Activated CD4-positive, alpha-beta memory T cell treated with anti-CD3 and anti-CD28 coated beads, Interleukin-2, amount 10 ng/mL, durations not matched to agents 7 days and 5 days (primary cell): ENCODE measurements at regions of chr16 and their contacts with region 1.

Region 1: GRCh38 chr16:31179747-31180459 is at the start of gene FUS:
- DNase-seq: peak; percentile 91
- H3K4me3 Mint-ChIP-seq: peak within 1 kb of the TSS; percentile 93
- H3K27ac Mint-ChIP-seq: peak within 1 kb of the TSS; percentile 98
- H3K4me1 Mint-ChIP-seq: peaks cover 53% of the 10 kb centered on the region
- H3K27me3 Mint-ChIP-seq: peaks cover 2% of the 10 kb centered on the region
- total RNA-seq, gene FUS: 386 to 397 TPM

Region 2: GRCh38 chr16:31055613-31056012 is 124.3 kb before region 1 on chr16:
- CTCF ChIA-PET with region 1: no interaction called
- POLR2A ChIA-PET with region 1: no interaction called
- DNase-seq: no peak
- H3K4me3 Mint-ChIP-seq: no peak overlapping the region
- H3K27ac Mint-ChIP-seq: no peak overlapping the region
- H3K4me1 Mint-ChIP-seq: peaks cover 20% of the 10 kb centered on the region
- H3K27me3 Mint-ChIP-seq: peaks cover 2% of the 10 kb centered on the region

Region 3: GRCh38 chr16:31168848-31169247 is 11.1 kb before region 1 on chr16:
- CTCF ChIA-PET with region 1: interaction called, 4 read pairs
- POLR2A ChIA-PET with region 1: interaction called, 16 read pairs
- DNase-seq: no peak
- H3K4me3 Mint-ChIP-seq: no peak overlapping the region
- H3K27ac Mint-ChIP-seq: no peak overlapping the region
- H3K4me1 Mint-ChIP-seq: no peaks in the 10 kb centered on the region
- H3K27me3 Mint-ChIP-seq: no peaks in the 10 kb centered on the region

Region 4: GRCh38 chr16:31202414-31203375 is 22.8 kb after region 1 on chr16 and contains the start of gene PYCARD:
- CTCF ChIA-PET with region 1: interaction called, 5 read pairs
- POLR2A ChIA-PET with region 1: interaction called, 77 read pairs
- DNase-seq: peak; percentile 58
- H3K4me3 Mint-ChIP-seq: peak within 1 kb of the TSS; percentile 87
- H3K27ac Mint-ChIP-seq: peak within 1 kb of the TSS; percentile 79
- H3K4me1 Mint-ChIP-seq: peaks cover 61% of the 10 kb centered on the region
- H3K27me3 Mint-ChIP-seq: peaks cover 5% of the 10 kb centered on the region
- total RNA-seq, gene PYCARD: 96.1 to 102 TPM

Region 5: DNA sequence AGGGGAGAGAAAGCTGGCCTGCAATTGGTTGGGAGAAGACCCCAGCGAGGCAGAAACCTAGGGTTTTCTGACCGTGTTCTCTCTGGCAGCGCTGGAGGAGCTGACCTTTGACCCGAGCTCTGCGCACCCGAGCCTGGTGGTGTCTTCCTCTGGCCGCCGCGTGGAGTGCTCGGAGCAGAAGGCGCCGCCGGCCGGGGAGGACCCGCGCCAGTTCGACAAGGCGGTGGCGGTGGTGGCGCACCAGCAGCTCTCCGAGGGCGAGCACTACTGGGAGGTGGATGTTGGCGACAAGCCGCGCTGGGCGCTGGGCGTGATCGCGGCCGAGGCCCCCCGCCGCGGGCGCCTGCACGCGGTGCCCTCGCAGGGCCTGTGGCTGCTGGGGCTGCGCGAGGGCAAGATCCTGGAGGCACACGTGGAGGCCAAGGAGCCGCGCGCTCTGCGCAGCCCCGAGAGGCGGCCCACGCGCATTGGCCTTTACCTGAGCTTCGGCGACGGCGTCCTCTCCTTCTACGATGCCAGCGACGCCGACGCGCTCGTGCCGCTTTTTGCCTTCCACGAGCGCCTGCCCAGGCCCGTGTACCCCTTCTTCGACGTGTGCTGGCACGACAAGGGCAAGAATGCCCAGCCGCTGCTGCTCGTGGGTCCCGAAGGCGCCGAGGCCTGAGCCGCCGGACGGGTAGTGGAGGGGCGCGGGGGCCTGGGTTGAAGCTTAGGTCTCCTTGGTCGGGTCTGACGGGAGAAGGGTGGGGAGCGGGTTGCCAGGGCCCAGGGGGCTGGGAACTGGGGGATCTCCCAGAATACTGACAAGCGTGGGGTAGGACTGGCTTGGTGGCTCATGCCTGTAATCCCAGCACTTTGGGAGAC is 44.4 kb after region 1 on chr16:
- CTCF ChIA-PET with region 1: no interaction called
- POLR2A ChIA-PET with region 1: no interaction called
- DNase-seq: no peak
- H3K4me3 Mint-ChIP-seq: no peak overlapping the region
- H3K27ac Mint-ChIP-seq: no peak overlapping the region
- H3K4me1 Mint-ChIP-seq: no peaks in the 10 kb centered on the region
- H3K27me3 Mint-ChIP-seq: peaks cover 13% of the 10 kb centered on the region

Region 6: GRCh38 chr16:31440516-31441184 is 260.7 kb after region 1 on chr16:
- CTCF ChIA-PET with region 1: no interaction called
- POLR2A ChIA-PET with region 1: interaction called, 17 read pairs
- DNase-seq: no peak
- H3K4me3 Mint-ChIP-seq: no peak overlapping the region
- H3K27ac Mint-ChIP-seq: no peak overlapping the region
- H3K4me1 Mint-ChIP-seq: peaks cover 26% of the 10 kb centered on the region
- H3K27me3 Mint-ChIP-seq: no peaks in the 10 kb centered on the region